ENCODE measurements at regions of chr9 and their contacts with region 1.

Region 1: DNA sequence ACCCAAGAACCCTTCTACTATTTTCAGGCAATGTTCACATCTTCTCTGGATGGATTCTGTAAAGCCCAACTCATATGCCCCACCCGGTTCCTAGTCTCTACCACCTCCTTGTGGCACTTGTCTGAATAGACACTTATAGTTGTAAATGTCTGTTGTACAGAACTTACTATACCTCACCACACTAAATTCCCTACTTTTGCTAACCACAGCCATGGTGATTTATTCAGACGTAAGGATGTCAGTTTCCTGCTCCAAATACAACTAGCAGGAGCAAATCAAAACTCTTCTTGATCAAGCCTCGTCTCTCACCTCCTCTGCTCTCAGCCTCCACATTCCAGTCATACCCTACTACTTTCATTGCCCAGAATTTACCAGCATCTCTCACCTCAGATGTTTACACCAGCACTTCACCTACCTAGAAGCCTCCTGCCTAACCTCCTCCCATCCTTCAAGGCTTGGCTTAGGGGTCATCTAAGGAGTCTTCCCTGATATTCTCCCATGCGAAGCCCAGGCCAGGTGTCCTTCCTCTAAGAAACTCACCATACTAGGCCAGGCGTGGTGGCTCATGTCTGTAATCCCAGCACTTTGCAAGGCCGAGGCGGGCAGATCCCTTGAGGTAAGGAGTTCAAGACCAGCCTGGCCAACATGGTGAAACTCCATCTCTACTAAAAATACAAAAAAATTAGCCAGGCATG is 75.5 kb downstream of the MAPKAP1 start:
- DNase-seq: peak in 1 of 10 donors; percentile 35
- H3K4me3 ChIP-seq: no peak overlapping the region
- H3K27ac ChIP-seq: no peak overlapping the region
- H3K27me3 ChIP-seq: no peaks in the 10 kb centered on the region
- CTCF ChIP-seq: peak in 54 of 56 donors; percentile 18 to 74 (median 50)

Region 2: DNA sequence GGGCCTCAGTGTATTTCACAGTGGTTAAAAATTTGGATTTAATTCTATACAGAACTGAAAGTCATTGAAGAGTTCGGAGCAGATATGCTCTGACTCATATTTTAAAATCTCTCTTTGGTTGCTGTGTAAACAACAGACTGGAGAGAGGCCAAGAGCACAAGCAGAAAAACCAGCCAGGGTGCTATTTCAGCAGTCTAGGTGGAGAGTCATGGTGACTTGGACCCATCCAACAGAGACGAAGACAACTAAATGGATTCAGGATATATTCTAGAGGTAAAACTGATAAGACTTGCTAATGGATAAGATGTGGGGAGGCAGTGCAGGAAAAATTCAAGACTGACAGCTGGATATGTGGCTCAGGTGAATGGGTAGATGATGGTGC is 93.5 kb before region 1 on chr9:
- intact Hi-C with region 1: no loop called
- DNase-seq: no peak
- H3K4me3 ChIP-seq: no peak overlapping the region
- H3K27ac ChIP-seq: no peak overlapping the region
- H3K27me3 ChIP-seq: no peaks in the 10 kb centered on the region
- CTCF ChIP-seq: no peak

Region 3: GRCh38 chr9:125558453-125559092 is 73.0 kb before region 1 on chr9:
- intact Hi-C with region 1: loop called in 1 of 2 experiments (anchors 5 kb)
- DNase-seq: peak in 6 of 10 donors; percentile 32 to 81 (median 54)
- H3K4me3 ChIP-seq: no peak overlapping the region
- H3K27ac ChIP-seq: peak overlapping the region in 17 of 59 donors; percentile 2 to 58 (median 22)
- H3K27me3 ChIP-seq: no peaks in the 10 kb centered on the region
- CTCF ChIP-seq: peak; percentile 68 to 92 (median 83)

Region 4: GRCh38 chr9:125763394-125763801 is 131.9 kb after region 1 on chr9:
- intact Hi-C with region 1: loop called in 1 of 2 experiments (anchors 10 kb)
- DNase-seq: no peak
- H3K4me3 ChIP-seq: peak overlapping the region in 13 of 59 donors; percentile 4 to 29 (median 18)
- H3K27ac ChIP-seq: peak overlapping the region in 9 of 59 donors; percentile 4 to 38 (median 14)
- H3K27me3 ChIP-seq: peaks cover 0 to 3% (median 0%) of the 10 kb centered on the region in 45 donors
- CTCF ChIP-seq: no peak

Measured in dorsolateral prefrontal cortex (tissue), 120 donors.